Heart left ventricle (tissue), 16 donors: ENCODE measurements at regions of chr7 and their contacts with region 1.

Region 1: DNA sequence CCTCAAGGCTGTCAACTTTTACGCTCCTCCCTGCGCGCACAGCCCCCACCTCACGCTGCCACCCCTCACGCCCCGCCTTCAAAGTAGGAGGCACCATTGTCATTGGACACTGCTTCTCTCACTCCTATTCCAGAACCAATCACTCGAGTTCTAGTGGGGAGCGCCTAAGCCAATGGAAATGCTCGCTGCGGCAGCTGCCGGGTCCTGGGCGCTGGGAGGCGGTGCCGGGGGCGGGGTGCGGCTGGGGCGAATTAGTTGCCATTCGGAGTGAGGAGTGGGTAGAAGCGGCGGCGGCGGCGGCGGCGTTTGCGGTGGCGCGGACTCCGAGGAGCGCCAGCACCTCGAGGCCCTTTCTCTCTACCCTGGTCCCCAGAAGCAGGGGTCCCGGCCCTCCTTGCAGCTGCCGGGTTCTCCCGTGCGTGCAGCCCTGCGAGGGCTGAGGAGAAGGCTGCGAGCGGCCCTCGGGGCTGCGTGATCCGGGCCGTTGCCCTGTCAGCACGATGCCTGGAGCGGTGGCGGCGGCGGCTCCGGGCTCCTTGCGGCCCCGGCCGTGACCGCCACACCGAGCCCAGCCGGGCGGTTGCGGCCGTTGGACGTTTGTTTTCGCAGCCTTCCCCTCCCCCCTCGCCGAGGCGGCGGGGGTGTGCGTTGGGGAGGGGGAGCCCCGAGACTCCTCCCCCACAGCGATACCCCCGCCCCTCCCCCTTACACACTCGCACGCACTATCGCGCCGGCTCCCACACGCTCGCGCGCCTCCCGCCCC is at the start of gene GLCCI1:
- DNase-seq: peak; percentile 96 to 98 (median 97)
- ATAC-seq: peak; percentile 99
- H3K4me3 ChIP-seq: peak within 1 kb of the TSS; percentile 66 to 99 (median 91)
- H3K27ac ChIP-seq: peak within 1 kb of the TSS; percentile 69 to 98 (median 94)
- H3K4me1 ChIP-seq: peaks cover 0 to 26% (median 12%) of the 10 kb centered on the region in 12 donors
- H3K27me3 ChIP-seq: no peaks in the 10 kb centered on the region
- CTCF ChIP-seq: no peak
- POLR2A ChIP-seq: peak in 1 of 2 donors; percentile 94
- total RNA-seq, gene GLCCI1: 2.4 to 10.8 (median 7.7) TPM

Region 2: DNA sequence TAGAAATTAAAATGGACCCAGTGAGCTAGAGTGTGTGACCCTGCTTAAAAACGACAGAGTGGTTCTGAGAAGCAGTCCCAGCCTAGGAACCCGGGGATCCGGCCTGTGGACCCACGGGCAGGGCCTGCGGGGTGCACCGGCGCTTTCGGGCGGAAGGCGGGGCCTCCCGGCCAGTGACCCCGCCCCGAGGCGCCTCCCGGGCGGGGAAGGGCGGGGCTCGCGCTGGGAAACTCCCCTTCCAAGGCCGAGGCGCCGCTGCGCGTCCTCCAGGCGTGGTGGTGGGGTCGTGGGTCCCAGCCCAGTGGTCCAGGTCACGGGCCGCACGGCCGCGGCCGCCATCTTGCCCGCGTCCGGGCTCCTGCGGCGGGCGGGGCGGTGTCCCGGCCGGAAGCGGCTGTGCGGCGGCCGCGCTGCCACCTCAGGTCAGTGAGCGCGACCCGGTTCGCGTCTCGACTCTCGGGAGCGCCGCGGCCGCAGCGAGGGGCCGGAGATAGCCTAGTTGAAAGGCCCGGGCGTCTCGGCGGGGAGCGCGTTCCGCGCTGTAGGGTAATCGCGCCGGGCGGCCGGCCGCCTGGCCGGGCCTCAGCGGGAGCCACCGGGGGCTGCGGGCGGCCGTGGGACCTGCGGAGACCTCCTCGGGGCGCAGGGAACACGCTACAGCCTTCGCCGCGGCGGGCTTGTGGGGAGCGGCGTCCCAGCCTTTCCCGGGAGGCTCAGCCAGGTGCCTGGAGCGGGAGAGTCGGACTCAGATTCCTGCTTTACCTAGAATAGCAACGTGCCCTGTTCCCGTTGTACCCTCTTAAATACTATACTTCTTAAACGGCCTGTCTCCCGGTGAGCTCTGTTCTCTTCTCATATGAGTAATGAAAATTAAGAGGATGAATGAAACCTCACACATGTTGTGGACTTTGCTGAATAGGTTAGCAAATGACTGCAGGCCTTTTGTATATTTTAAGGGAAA is 401.8 kb before region 1 on chr7 and contains the start of gene MIOS:
- intact Hi-C with region 1: loop called in 1 of 10 experiments (anchors 10 kb)
- DNase-seq: peak; percentile 90 to 95 (median 93)
- ATAC-seq: peak; percentile 95 to 99 (median 98)
- H3K4me3 ChIP-seq: peak within 1 kb of the TSS; percentile 72 to 97 (median 86)
- H3K27ac ChIP-seq: peak within 1 kb of the TSS; percentile 82 to 97 (median 93)
- H3K4me1 ChIP-seq: peaks cover 0 to 45% (median 19%) of the 10 kb centered on the region in 12 donors
- H3K27me3 ChIP-seq: no peaks in the 10 kb centered on the region
- CTCF ChIP-seq: peak in 1 of 12 donors; percentile 8
- POLR2A ChIP-seq: peak; percentile 21 to 85
- total RNA-seq, gene MIOS: 21.0 to 30.8 (median 22.3) TPM

Region 3: DNA sequence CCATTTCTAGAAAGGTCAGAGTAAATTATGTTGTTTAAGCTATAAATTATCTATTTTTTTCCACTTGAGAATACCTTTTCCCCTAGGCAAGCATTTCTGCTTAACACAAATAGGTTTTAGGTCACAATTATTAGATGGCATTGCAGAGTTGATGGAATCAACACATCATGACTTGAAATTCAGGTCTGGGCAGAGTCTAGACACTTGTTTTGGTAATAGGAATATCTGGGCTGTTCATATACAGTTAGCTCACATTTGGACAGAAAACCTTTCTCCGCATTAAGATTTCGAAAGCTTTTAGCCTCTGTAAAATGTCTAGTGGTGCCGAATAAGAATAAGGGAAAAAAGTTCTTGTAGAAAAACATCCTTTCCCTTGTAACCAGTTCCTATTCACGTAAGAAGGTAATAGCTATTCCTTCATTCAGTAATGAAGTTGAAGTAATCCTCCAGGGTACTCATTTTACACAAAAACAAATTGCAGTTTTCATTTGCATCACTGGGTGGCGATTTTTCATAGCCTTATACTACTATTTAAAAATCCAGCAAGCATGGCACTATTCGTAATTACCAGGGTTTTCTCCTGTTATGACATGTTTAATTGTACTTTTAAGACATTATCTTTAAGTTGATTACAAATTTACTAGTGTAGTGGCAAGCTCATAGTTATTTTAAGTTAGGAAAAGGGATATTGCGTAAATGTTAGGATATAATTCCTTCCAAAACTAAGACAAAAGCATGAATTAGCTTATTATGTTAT is 287.4 kb before region 1 on chr7:
- intact Hi-C with region 1: loop called in 3 of 10 experiments (anchors 5 to 10 kb)
- DNase-seq: peak in 2 of 5 donors; percentile 61
- ATAC-seq: peak in 3 of 4 donors; percentile 77 to 91 (median 89)
- H3K4me3 ChIP-seq: peak overlapping the region in 4 of 12 donors; percentile 12 to 34 (median 15)
- H3K27ac ChIP-seq: peak overlapping the region; percentile 3 to 69 (median 35)
- H3K4me1 ChIP-seq: peaks cover 0 to 30% (median 21%) of the 10 kb centered on the region in 12 donors
- H3K27me3 ChIP-seq: no peaks in the 10 kb centered on the region
- CTCF ChIP-seq: peak; percentile 47 to 82 (median 71)
- POLR2A ChIP-seq: no peak

Region 4: DNA sequence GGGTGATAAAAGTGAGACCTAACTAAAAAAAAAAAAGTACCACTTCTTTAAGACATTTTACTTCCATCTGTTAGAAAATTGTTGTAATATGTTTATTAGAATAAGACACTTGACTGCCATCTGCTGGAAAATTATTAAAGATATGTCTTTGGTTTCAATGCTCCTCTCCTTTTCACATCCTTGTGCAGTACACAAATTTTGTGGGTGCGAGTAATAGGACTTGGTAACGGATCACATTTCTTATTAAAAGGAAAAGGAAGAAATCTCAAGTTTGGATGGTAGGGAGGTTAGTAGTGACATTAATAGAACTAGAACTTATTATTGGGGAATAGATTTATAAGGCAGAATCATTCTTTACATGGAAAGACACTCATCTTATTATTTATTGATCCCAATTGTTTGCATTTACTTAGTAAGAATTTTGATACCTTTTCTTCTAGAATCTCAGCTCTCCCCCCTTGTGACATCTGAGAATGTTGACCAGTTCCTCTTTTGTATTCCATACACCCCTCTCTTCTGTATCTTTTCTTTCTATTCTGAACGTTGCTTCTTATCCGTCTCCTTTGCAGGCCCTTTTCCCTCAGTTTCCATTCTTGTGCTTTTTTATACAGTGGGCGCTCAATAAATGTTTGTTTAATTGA is 207.3 kb before region 1 on chr7:
- intact Hi-C with region 1: loop called in 2 of 10 experiments (anchors 10 kb)
- DNase-seq: no peak
- ATAC-seq: peak; percentile 33 to 66 (median 52)
- H3K4me3 ChIP-seq: peak overlapping the region in 10 of 12 donors; percentile 39 to 61 (median 52)
- H3K27ac ChIP-seq: peak overlapping the region in 11 of 12 donors; percentile 9 to 80 (median 68)
- H3K4me1 ChIP-seq: peaks cover 0 to 17% (median 8%) of the 10 kb centered on the region in 12 donors
- H3K27me3 ChIP-seq: no peaks in the 10 kb centered on the region
- CTCF ChIP-seq: peak; percentile 36 to 67 (median 54)
- POLR2A ChIP-seq: no peak

Region 5: DNA sequence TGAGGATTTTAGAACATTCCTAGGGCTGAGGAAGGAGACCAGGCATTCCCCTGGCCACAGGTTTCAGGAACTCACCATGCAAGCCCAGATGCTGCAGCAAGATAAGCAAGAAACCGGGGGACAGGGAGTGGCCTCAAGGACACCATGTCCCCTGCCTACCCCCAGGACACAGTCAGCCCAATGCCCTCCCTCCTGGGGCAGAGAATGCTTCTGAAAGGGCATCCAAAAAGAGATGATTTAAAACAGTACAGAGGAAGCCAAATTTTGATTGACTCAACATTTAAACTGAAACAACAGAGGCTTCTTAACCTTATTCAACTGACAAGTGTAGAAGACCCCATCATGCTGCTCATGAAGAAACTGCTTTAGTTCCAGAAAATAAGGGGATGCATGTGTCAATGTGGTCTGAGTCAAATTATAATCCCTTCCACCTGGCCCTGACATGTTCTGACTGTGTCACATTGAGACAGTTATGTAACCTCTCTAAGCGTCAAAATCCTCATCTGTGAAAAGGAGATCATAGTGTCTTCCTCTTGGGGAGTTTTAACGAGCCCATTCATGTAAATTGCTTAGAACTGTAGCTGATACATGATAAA is 233.2 kb after region 1 on chr7:
- intact Hi-C with region 1: loop called in 1 of 10 experiments (anchors 10 kb)
- DNase-seq: peak in 1 of 5 donors; percentile 31
- ATAC-seq: peak; percentile 41 to 69 (median 41)
- H3K4me3 ChIP-seq: no peak overlapping the region
- H3K27ac ChIP-seq: peak overlapping the region in 2 of 12 donors; percentile 13 to 27
- H3K4me1 ChIP-seq: peaks cover 0 to 35% (median 7%) of the 10 kb centered on the region in 12 donors
- H3K27me3 ChIP-seq: no peaks in the 10 kb centered on the region
- CTCF ChIP-seq: no peak
- POLR2A ChIP-seq: no peak